ENCODE measurements at regions of chr16 and their contacts with region 1.

Region 1: DNA sequence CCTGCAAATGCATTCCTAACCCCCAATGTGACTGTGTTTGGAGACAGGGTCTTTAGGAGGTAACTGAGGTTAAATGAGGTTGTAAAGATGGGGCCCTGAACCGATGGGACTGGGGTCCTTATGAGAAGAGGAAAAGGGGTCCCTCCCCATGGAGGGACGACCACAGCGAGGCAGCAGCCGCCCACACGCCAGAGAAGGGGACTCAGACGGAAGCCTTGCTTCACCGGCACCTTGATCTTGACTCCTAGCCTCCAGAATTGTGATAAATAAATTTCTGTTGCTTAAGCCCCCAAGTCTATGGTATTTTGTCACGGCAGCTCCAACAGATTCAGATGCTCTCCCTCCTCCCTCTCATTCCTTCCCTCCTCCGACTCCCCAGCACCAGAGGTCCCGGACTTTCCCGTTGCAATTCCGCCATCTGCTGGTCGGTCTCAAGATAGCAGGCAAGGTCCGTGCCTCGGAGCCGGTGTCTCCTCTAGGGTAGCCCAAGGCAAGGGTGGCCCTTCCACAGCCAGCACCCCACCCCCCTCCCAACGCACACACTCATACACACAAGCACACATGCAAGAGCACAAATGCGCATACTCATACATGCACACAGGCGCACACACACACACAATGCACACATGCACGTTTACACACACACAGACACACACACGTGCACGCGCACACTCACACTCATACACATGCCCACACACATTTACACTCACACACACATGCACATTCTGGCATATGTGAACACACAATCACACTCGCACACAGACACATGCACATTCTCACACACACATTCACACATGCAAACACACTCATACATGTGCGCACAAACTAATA is 23.1 kb upstream of the C16orf78 start:
- DNase-seq: peak; percentile 41 to 92 (median 82)

Region 2: GRCh38 chr16:48687421-48688038 is 663.0 kb before region 1 on chr16:
- intact Hi-C with region 1: loop called (anchors 5 kb)
- DNase-seq: peak in 40 of 42 donors; percentile 5 to 78 (median 38)